Mammary epithelial cell (primary cell): ENCODE measurements at regions of chr9 and their contacts with region 1.

Region 1: DNA sequence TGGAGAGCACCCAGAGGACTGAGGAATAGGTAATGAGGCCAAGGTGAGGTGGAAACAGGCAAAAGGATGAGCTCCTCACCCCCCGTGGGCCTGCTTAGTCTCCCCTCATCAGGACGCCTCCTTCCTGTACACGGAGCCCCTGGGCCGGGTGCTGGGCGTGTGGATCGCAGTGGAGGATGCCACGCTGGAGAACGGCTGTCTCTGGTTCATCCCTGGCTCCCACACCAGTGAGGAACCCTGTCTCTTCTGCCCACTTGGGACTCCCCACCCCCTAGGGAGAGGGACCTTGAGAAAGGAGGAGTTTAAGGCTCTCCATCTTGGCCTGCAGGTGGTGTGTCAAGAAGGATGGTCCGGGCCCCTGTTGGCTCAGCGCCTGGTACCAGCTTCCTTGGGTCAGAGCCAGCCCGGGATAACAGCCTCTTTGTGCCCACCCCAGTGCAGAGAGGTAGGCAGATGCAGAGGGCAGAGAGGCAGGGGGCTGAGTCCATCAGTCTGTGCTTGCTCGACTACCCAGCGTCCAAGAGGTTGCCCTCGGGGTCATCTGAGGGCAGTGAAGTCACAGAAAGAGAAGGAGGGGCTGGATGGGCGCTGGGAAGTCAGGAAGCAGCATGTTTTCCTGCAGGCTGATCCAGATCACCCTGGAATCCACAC is 7.0 kb downstream of the DOLK start:
- DNase-seq: no peak
- H3K4me3 ChIP-seq: no peak overlapping the region
- H3K27ac ChIP-seq: no peak overlapping the region
- H3K4me1 ChIP-seq: peaks cover 10% of the 10 kb centered on the region
- H3K27me3 ChIP-seq: no peaks in the 10 kb centered on the region
- CTCF ChIP-seq: no peak

Region 2: DNA sequence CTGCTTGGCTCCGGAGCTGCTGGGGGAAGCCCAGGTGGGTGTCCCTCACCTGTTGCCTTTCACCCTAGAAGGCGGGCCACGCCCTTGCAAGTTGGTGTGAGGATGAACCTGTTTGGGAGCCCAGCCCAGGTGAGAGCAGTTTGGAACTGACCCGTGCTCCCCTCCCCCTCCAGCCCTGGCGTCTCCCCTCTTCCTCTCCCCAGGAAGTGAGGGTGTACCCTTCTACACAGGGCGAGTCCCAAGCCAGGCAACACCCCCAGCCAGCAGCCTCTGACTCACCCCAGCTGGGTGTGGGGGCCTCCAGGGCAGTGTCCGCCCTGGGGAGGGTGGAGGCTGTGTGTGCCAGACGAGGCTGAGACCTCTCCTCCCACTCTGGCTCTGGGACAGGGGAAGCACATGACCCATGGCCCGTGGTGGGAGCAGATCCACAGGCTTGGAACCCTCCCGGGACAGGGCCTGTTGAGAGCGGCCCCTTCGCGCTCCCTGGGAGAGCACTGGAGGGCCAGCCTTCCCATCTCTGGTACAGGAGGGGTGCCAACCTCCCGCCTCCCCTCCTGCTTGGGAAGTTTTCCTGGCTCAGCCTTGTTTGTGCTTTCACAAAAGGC is 48.0 kb before region 1 on chr9:
- CTCF ChIA-PET with region 1: no interaction called
- dilution Hi-C with region 1: no loop called
- in situ Hi-C with region 1: no loop called
- intact Hi-C with region 1: no loop called
- DNase-seq: peak; percentile 97
- H3K4me3 ChIP-seq: peak overlapping the region in 2 of 3 experiments; percentile 6 to 10
- H3K27ac ChIP-seq: peak overlapping the region; percentile 76
- H3K4me1 ChIP-seq: peaks cover 56% of the 10 kb centered on the region
- H3K27me3 ChIP-seq: no peaks in the 10 kb centered on the region
- CTCF ChIP-seq: no peak

Region 3: GRCh38 chr9:128987805-128988204 is 47.4 kb after region 1 on chr9:
- CTCF ChIA-PET with region 1: no interaction called
- dilution Hi-C with region 1: loop called (anchors 5 kb)
- in situ Hi-C with region 1: no loop called
- intact Hi-C with region 1: no loop called
- DNase-seq: peak; percentile 64
- H3K4me3 ChIP-seq: no peak overlapping the region
- H3K27ac ChIP-seq: peak overlapping the region; percentile 85
- H3K4me1 ChIP-seq: peaks cover 10% of the 10 kb centered on the region
- H3K27me3 ChIP-seq: no peaks in the 10 kb centered on the region
- CTCF ChIP-seq: no peak